Astrocyte of the cerebellum (primary cell): ENCODE measurements at regions of chr11 and their contacts with region 1.

Region 1: DNA sequence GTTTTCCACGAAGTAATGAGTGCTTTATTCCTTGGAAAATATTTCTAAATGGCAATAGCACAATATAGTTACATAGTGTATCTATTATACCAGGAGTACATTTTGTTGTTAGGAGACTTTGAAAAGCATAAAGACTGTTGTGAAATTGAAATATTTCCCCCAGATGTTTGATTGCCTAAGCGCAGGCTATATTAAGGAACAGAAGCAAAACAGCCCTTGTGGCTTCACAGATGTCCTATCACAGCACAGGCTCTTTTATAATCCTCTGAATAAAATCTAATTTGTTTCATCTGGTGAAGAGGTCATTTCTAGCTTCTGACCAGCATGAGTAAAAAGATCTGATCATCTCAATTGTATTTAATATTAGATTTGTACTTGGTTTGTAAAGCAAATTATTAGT is 48.2 kb downstream of the BSX start:
- DNase-seq: no peak
- H3K4me3 ChIP-seq: no peak overlapping the region
- CTCF ChIP-seq: no peak

Region 2: GRCh38 chr11:122832721-122833470 is 100.5 kb before region 1 on chr11:
- in situ Hi-C with region 1: no loop called
- DNase-seq: no peak
- H3K4me3 ChIP-seq: no peak overlapping the region
- CTCF ChIP-seq: no peak

Region 3: DNA sequence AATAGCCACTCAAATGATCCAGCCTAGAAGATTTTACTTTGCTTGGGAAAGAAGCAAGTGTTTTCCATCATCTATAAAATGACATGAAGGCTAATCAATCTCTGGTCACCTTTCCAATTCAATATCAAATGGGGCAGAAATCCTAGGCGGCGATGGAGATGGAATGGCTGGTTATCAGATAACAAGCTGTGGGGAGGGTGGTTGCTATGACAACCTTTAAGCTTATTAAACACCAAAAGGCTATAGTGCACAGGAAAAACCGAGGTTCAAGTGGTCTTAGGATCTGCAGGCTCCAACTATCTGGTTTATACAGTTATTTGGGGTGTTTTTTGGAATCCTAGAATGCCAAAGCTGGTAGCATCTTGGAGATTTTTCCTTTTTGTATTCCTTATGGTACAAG is 62.1 kb after region 1 on chr11:
- in situ Hi-C with region 1: no loop called
- DNase-seq: no peak
- H3K4me3 ChIP-seq: no peak overlapping the region
- CTCF ChIP-seq: no peak

Region 4: DNA sequence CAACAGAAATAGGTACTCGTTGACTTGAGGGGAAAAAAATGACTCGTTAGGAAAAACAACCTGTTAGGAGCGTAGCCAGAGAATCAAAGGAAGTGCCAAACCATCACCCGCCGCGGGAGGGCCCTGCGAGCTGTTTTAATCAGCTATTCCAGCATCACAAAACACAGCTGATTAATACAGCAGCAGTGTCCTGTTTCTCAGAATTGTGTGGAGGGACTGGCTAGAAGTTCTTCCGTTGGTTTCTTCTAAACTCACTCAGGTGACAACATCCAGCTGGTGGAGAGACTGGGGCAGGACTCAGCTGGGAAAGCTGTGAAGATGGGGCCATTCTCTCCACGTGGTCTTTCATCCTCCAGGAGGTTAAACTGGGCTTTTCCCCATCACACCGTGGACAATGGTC is 100.5 kb after region 1 on chr11:
- in situ Hi-C with region 1: loop called (anchors 25 kb)
- DNase-seq: no peak
- H3K4me3 ChIP-seq: no peak overlapping the region
- CTCF ChIP-seq: peak; percentile 18